Activated CD4-positive, alpha-beta memory T cell treated with anti-CD3 and anti-CD28 coated beads, Interleukin-2, amount 10 ng/mL, durations not matched to agents 7 days and 5 days (primary cell): ENCODE measurements at regions of chr16 and their contacts with region 1.

Region 1: DNA sequence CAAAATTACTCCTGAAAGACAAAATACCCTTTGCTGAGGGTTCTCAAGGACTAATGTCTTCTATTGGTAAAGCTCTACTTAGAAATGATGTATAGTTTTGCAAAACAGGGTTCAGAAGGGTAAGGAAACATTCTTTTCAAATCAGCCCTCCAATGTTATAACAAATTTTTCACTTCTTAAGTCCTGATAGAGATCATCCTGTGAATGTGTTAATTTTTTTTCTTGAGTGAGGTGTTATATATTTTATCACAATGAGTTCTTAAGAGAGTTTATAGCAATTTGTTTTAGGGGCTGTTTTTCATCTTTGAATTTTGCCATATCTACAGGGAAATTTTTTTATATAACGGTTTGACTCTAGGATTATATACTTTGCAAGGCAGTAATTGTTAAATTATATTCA is 29.5 kb downstream of the CYB5B start:
- DNase-seq: no peak
- H3K4me3 Mint-ChIP-seq: no peak overlapping the region
- H3K27ac Mint-ChIP-seq: no peak overlapping the region
- H3K4me1 Mint-ChIP-seq: peaks cover 24% of the 10 kb centered on the region
- H3K27me3 Mint-ChIP-seq: no peaks in the 10 kb centered on the region

Region 2: GRCh38 chr16:69465083-69465721 is 11.3 kb after region 1 on chr16:
- CTCF ChIA-PET with region 1: interaction called, 3 read pairs
- POLR2A ChIA-PET with region 1: interaction called, 10 read pairs
- DNase-seq: peak; percentile 25
- H3K4me3 Mint-ChIP-seq: peak overlapping the region; percentile 48
- H3K27ac Mint-ChIP-seq: peak overlapping the region; percentile 86
- H3K4me1 Mint-ChIP-seq: peaks cover 54% of the 10 kb centered on the region
- H3K27me3 Mint-ChIP-seq: no peaks in the 10 kb centered on the region

Region 3: GRCh38 chr16:69494993-69495392 is 41.1 kb after region 1 on chr16:
- CTCF ChIA-PET with region 1: no interaction called
- POLR2A ChIA-PET with region 1: no interaction called
- DNase-seq: peak; percentile 47
- H3K4me3 Mint-ChIP-seq: no peak overlapping the region
- H3K27ac Mint-ChIP-seq: no peak overlapping the region
- H3K4me1 Mint-ChIP-seq: no peaks in the 10 kb centered on the region
- H3K27me3 Mint-ChIP-seq: no peaks in the 10 kb centered on the region

Region 4: DNA sequence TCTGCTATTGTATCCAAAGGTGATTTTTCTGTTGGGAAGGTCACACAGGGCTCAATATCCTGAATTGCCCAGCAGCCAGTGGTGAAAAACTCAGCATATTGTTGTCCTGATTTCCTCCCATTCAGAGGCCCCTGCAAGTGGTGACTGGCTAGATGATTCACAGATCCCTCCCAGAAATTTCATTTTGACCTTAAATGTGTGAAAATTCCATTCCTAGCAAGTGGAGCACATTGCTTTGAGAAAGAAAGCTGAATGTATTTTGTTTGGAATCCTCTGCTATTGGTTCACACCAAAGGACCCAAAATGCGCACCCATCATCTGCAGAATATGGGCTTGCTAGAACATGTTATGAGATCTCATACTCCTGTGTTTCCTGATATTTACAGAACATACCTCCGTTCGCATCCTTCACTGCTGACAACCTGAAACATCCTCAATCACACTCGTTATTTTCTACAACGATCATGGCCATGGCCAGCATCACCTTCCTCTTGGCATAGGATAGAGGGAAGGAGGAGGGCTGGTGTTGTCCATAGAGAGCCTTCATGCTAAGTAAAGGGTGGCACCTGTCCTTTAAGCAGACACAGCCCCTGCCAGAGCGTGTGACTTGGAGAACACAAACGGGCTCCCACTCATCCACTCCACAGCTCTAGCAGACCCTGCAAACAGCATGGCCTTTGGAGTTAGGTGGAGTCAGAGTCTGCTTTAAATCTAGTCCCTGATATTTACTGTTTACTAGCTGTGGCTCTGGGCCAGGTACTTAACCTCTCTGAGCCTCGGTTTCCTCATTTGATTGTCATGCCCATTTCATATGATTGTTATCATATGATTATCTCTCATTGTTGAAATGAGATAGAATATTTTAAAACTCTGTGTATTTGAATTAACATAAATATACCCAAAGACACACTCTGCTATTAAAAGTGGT is 81.5 kb after region 1 on chr16:
- CTCF ChIA-PET with region 1: no interaction called
- POLR2A ChIA-PET with region 1: no interaction called
- DNase-seq: no peak
- H3K4me3 Mint-ChIP-seq: no peak overlapping the region
- H3K27ac Mint-ChIP-seq: no peak overlapping the region
- H3K4me1 Mint-ChIP-seq: peaks cover 12% of the 10 kb centered on the region
- H3K27me3 Mint-ChIP-seq: peaks cover 1% of the 10 kb centered on the region